A673 (cell line): ENCODE measurements at regions of chr14 and their contacts with region 1.

Region 1: DNA sequence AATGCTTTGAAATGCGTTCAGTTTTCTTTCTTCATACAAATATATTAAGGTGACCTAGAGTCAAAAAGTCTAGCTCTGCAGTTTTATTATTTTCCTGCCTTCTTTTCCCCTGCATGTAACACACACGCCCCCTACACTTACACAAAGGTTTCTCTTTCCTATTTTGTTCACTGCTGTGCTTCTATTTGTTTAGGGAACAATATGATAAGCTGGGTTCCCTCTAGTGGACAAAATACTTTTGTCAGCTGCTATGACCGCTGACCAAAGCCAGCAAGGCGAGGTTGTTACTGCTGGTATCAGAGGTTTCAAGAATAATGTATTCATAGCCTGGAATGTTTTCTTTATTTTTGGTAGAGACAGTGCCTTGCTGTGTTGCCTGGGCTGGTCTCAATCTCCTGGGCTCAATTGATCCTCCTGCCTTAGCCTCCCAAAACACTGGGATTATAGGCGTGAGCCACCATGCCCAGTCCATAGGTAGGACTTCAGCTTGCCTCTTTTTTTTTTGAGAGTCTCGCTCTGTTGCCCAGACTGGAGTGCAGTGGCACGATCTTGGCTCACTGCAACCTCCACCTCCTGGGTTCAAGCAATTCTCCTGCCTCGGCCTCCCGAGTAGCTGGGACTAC is 33.4 kb downstream of the FNTB start:
- DNase-seq: peak; percentile 54
- H3K4me3 ChIP-seq: no peak overlapping the region
- H3K27ac ChIP-seq: no peak overlapping the region
- H3K4me1 ChIP-seq: no peaks in the 10 kb centered on the region
- H3K27me3 ChIP-seq: no peaks in the 10 kb centered on the region
- CTCF ChIP-seq: peak; percentile 49

Region 2: DNA sequence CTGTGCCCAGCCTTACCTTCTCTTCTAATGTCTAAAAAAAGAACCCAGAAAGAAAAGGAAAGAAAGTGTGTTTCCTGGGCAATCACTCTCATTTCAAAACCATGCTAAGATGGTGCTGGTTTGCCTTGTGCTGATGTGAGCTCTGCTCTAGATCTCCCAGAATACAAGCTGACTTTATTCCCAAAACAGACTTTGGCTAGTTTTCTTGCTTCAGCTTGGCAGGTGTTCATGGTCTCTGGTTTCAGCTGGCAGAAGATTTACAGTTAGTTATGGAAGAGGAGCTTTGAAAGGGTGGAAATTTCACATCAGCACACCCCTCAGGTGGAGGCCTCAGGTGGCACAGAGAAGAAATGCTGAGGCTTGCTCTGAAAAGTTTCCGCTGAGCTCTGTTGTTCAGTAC is 435.9 kb before region 1 on chr14:
- CTCF ChIA-PET with region 1: no interaction called
- POLR2A ChIA-PET with region 1: no interaction called
- intact Hi-C with region 1: no loop called
- DNase-seq: no peak
- H3K4me3 ChIP-seq: no peak overlapping the region
- H3K27ac ChIP-seq: no peak overlapping the region
- H3K4me1 ChIP-seq: no peaks in the 10 kb centered on the region
- H3K27me3 ChIP-seq: no peaks in the 10 kb centered on the region
- CTCF ChIP-seq: no peak

Region 3: DNA sequence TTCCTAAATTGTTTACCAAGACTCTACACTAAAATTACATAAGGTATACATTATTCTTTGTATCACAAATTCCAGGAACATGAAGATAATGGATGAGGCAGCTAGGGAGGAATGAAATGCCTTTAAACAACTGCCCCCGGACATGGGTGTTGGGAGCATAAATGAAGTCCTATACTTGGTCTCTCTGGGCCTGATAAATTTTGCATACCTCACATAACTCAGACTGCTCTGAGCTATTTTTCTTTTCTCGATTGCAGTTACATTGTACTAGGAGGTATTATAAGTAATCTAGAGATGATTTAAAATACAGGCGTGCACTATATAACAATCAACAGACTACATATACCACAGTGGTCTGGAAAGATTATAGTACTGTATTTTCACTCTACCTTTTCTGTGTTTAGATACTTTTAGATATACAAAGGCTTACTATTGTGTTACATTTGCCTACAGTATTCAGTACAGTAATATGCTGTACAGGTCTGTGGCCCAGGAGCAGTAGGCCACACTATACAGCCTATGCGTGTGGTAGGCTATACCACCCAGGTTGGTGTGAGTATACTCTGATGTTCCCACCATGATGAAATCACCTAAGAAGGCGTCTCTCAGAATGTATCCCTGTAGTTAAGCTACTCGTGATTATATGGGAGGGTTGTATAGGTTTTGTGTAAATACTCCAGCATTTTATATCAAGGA is 19.0 kb before region 1 on chr14:
- CTCF ChIA-PET with region 1: no interaction called
- POLR2A ChIA-PET with region 1: no interaction called
- intact Hi-C with region 1: loop called (anchors 2 kb)
- DNase-seq: no peak
- H3K4me3 ChIP-seq: no peak overlapping the region
- H3K27ac ChIP-seq: no peak overlapping the region
- H3K4me1 ChIP-seq: peaks cover 8% of the 10 kb centered on the region
- H3K27me3 ChIP-seq: no peaks in the 10 kb centered on the region
- CTCF ChIP-seq: no peak